Uterus (tissue), 4 donors: ENCODE measurements at regions of chr11 and their contacts with region 1.

Region 1: DNA sequence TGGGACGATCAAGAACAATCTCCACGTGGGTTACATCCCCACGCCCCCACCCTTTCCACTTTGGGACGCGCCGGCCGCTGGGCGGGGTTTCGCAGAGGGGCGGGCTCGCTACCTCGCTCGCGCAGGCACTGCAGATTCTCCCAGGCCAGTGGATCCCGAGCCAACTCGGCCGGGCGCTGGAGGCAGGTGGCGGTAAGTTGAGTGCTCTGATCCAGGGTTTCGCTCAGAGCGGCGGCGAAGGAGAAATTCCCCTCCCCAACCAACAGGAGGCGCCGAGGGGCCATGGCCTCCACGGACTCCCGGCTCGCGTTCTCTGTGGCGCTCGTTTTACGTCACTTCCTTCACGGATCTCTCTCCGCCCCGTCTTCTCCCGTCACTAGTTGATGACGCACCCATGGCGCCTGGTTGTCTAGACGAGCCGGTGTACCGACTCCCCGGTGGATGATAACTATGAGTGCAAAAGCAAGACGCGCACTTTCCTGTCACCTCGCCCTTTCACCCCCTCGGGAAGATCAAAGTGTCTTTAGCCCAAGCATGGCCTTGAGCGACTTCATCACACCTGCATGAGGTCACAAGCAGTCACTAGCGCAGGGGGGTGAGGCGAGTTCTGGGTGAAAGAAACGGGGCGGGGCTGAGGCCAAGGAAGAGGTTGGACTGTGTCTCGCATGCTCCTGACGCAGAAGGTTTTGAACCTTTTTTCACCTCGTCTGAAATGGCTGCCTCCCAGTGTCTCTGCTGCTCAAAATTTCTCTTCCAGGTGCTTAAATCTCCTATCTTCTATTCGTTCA is at the starts of genes CFAP68 and FDXACB1:
- DNase-seq: peak; percentile 96 to 98
- H3K4me3 ChIP-seq: peak within 1 kb of the TSS; percentile 59 to 76
- H3K27ac ChIP-seq: peak within 1 kb of the TSS; percentile 96
- H3K4me1 ChIP-seq: peaks cover 0 to 6% of the 10 kb centered on the region in 2 donors
- H3K27me3 ChIP-seq: no peaks in the 10 kb centered on the region
- CTCF ChIP-seq: peak; percentile 97 to 99 (median 98)
- POLR2A ChIP-seq: peak; percentile 65 to 86
- total RNA-seq, gene CFAP68: 0.29 to 22.8 (median 4.2) TPM
- total RNA-seq, gene FDXACB1: 1.7 to 7.4 (median 3.3) TPM in 3 of 4 donors, not detected in the other

Region 2: DNA sequence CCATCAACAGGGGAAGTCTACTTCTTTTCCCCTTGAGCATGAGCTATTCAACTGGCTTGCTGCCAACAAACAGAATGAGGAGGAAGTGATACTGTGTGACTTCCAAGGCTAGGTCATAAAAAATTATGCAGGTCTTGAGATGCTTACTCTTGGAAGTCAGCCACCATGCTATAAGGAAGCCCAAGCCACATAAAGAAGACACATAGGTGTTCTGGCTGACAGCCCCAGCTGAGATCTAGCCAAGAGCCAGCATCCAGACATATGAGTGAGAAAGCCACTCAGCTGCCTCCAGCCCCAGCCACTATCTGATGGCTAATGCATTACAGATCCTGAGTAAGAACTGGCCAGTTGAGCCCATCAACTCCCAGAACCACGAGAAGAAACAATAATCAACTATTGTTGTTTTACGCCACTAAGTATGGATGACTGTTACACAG is 81.9 kb before region 1 on chr11:
- intact Hi-C with region 1: no loop called
- DNase-seq: no peak
- H3K4me3 ChIP-seq: no peak overlapping the region
- H3K27ac ChIP-seq: no peak overlapping the region
- H3K4me1 ChIP-seq: no peaks in the 10 kb centered on the region
- H3K27me3 ChIP-seq: no peaks in the 10 kb centered on the region
- CTCF ChIP-seq: no peak
- POLR2A ChIP-seq: no peak

Region 3: GRCh38 chr11:111938687-111939160 is 59.7 kb after region 1 on chr11:
- intact Hi-C with region 1: loop called (anchors 10 kb)
- DNase-seq: peak in 1 of 2 donors; percentile 51
- H3K4me3 ChIP-seq: peak overlapping the region in 1 of 2 donors; percentile 72
- H3K27ac ChIP-seq: peak overlapping the region; percentile 78 to 79
- H3K4me1 ChIP-seq: no peaks in the 10 kb centered on the region
- H3K27me3 ChIP-seq: no peaks in the 10 kb centered on the region
- CTCF ChIP-seq: no peak
- POLR2A ChIP-seq: no peak

Region 4: DNA sequence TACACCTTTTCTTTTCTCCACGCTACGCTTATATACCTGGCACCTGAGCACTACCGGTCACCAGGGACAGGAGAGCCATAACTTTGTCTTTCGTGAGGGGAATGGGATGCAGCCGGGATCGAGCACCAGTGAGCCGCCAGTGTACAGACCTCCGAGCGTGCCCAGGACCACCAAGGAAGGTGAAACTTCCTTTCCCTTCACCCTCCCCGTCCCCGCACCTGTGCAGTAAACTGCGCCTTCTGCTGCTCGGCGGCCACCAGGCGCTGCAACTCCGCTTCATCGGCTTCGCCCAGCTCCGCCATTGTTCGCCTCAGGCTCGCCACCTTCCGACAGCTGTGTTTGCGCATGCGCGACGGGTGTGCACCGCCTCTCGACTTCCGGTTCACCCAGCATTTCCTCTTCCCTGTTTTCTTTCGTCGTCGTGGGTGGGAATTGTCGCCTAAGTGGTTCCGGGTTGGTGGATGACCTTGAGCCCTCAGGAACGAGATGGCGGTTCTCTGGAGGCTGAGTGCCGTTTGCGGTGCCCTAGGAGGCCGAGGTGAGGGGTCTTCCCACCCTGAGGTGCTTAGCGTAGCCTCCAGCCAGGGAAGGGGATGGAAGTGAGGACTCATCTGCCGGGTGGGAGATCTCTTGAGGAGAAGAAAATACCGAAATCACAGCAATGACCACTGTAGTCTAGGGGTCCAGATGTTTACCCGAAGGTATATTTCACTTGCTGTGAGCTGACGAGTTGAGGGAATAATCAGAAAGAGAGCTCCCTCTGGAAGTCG is 207.6 kb after region 1 on chr11 and contains the starts of genes SDHD and TIMM8B:
- intact Hi-C with region 1: loop called (anchors 10 kb)
- DNase-seq: peak; percentile 96
- H3K4me3 ChIP-seq: peak within 1 kb of the TSS; percentile 75 to 93
- H3K27ac ChIP-seq: peak within 1 kb of the TSS; percentile 76 to 83
- H3K4me1 ChIP-seq: peaks cover 0 to 4% of the 10 kb centered on the region in 2 donors
- H3K27me3 ChIP-seq: no peaks in the 10 kb centered on the region
- CTCF ChIP-seq: peak; percentile 16 to 47 (median 25)
- POLR2A ChIP-seq: peak; percentile 42 to 44
- total RNA-seq, gene SDHD: 84.7 to 157 (median 104) TPM
- total RNA-seq, gene TIMM8B: 17.7 to 56.1 (median 43.6) TPM

Region 5: GRCh38 chr11:112195906-112196305 is 316.9 kb after region 1 on chr11:
- intact Hi-C with region 1: no loop called
- DNase-seq: no peak
- H3K4me3 ChIP-seq: no peak overlapping the region
- H3K27ac ChIP-seq: no peak overlapping the region
- H3K4me1 ChIP-seq: no peaks in the 10 kb centered on the region
- H3K27me3 ChIP-seq: no peaks in the 10 kb centered on the region
- CTCF ChIP-seq: no peak
- POLR2A ChIP-seq: no peak